H1 (cell line): ENCODE measurements at regions of chr1 and their contacts with region 1.

Region 1: GRCh38 chr1:26864610-26865527 is 1.9 kb downstream of the SFN start:
- DNase-seq: peak; percentile 95 to 97
- H3K4me3 ChIP-seq: peak overlapping the region; percentile 58 to 68 (median 62)
- H3K27ac ChIP-seq: peak overlapping the region; percentile 52; the same call in 1 of the 2 replicates
- H3K4me1 ChIP-seq: peaks cover 0 to 27% (median 21%) of the 10 kb centered on the region in 4 experiments; a peak in 5 of 7 replicates
- H3K27me3 ChIP-seq: peaks cover 4 to 13% (median 12%) of the 10 kb centered on the region in 4 experiments; a peak in 5 of 7 replicates
- CTCF ChIP-seq: no peak; a peak in 1 of 4 replicates
- EP300 ChIP-seq: no peak
- POLR2A ChIP-seq: peak; percentile 76 to 83
- RAD21 ChIP-seq: no peak

Region 2: GRCh38 chr1:26529655-26530409 is 335.0 kb before region 1 on chr1 and contains the start of gene RPS6KA1:
- CTCF ChIA-PET with region 1: no interaction called
- POLR2A ChIA-PET with region 1: no interaction called
- DNase-seq: peak in 1 of 2 experiments; percentile 88
- H3K4me3 ChIP-seq: peak within 1 kb of the TSS; percentile 51 to 97 (median 94)
- H3K27ac ChIP-seq: peak within 1 kb of the TSS; percentile 42; the same call in 1 of the 2 replicates
- H3K4me1 ChIP-seq: peaks cover 11 to 20% (median 19%) of the 10 kb centered on the region in 4 experiments
- H3K27me3 ChIP-seq: no peaks in the 10 kb centered on the region
- CTCF ChIP-seq: no peak
- EP300 ChIP-seq: no peak
- POLR2A ChIP-seq: peak; percentile 67 to 69; a peak in 2 of 3 replicates
- RAD21 ChIP-seq: no peak
- total RNA-seq, gene RPS6KA1: 55.0 and 56.5 TPM in 2 replicates

Region 3: GRCh38 chr1:26797627-26798026 is 67.2 kb before region 1 on chr1:
- CTCF ChIA-PET with region 1: no interaction called
- POLR2A ChIA-PET with region 1: no interaction called
- DNase-seq: no peak
- H3K4me3 ChIP-seq: no peak overlapping the region
- H3K27ac ChIP-seq: no peak overlapping the region
- H3K4me1 ChIP-seq: peaks cover 3 to 12% (median 5%) of the 10 kb centered on the region in 4 experiments; a peak in 4 of 7 replicates
- H3K27me3 ChIP-seq: no peaks in the 10 kb centered on the region
- CTCF ChIP-seq: no peak
- EP300 ChIP-seq: no peak
- POLR2A ChIP-seq: no peak
- RAD21 ChIP-seq: no peak

Region 4: DNA sequence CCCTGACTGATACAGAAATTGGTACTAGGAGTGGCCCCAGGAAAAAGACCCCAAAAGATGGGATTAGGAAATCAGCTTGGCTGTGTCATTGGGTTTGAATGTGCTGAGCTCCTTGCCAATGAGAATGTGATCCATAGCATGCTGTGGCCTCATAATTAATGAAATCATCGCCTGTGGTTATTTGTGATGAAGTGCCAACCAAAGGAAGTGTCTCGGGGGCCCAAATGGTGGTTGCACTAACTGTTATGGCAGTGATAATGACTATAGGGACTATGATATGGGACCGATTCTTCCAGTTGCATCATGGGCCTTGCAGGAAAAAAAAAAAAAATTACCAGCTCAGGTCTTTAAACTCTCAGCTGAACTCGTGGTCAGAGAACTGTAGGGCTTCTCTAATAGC is 53.8 kb before region 1 on chr1:
- CTCF ChIA-PET with region 1: interaction called, 31 read pairs
- POLR2A ChIA-PET with region 1: interaction called, 3 read pairs
- DNase-seq: no peak
- H3K4me3 ChIP-seq: no peak overlapping the region
- H3K27ac ChIP-seq: no peak overlapping the region
- H3K4me1 ChIP-seq: no peaks in the 10 kb centered on the region
- H3K27me3 ChIP-seq: no peaks in the 10 kb centered on the region
- CTCF ChIP-seq: no peak
- EP300 ChIP-seq: no peak
- POLR2A ChIP-seq: no peak
- RAD21 ChIP-seq: no peak

Region 5: GRCh38 chr1:26826261-26827105 is 38.4 kb before region 1 on chr1 and contains the start of gene ZDHHC18:
- CTCF ChIA-PET with region 1: interaction called, 125 read pairs
- POLR2A ChIA-PET with region 1: interaction called, 4 read pairs
- DNase-seq: peak in 1 of 2 experiments; percentile 86
- H3K4me3 ChIP-seq: peak within 1 kb of the TSS; percentile 53 to 76 (median 56)
- H3K27ac ChIP-seq: no peak within 1 kb of the TSS
- H3K4me1 ChIP-seq: peaks cover 6 to 9% (median 7%) of the 10 kb centered on the region in 4 experiments; a peak in 6 of 7 replicates
- H3K27me3 ChIP-seq: no peaks in the 10 kb centered on the region
- CTCF ChIP-seq: peak; percentile 55 to 68 (median 65)
- EP300 ChIP-seq: no peak
- POLR2A ChIP-seq: peak in 1 of 2 experiments; percentile 34; a peak in 1 of 3 replicates
- RAD21 ChIP-seq: peak in 1 of 2 experiments; percentile 0; a peak in 2 of 4 replicates
- total RNA-seq, gene ZDHHC18: 29.2 and 29.7 TPM in 2 replicates

Region 6: GRCh38 chr1:26853156-26853555 is 11.7 kb before region 1 on chr1:
- CTCF ChIA-PET with region 1: interaction called, 547 read pairs
- POLR2A ChIA-PET with region 1: interaction called, 8 read pairs
- DNase-seq: peak in 1 of 2 experiments; percentile 94
- H3K4me3 ChIP-seq: no peak overlapping the region
- H3K27ac ChIP-seq: no peak overlapping the region
- H3K4me1 ChIP-seq: peaks cover 0 to 10% (median 6%) of the 10 kb centered on the region in 4 experiments; a peak in 6 of 7 replicates
- H3K27me3 ChIP-seq: no peaks in the 10 kb centered on the region
- CTCF ChIP-seq: peak; percentile 85 to 87 (median 85)
- EP300 ChIP-seq: no peak
- POLR2A ChIP-seq: no peak
- RAD21 ChIP-seq: peak; percentile 74 to 83

Region 7: GRCh38 chr1:26900001-26900814 is 35.3 kb after region 1 on chr1 and contains the start of gene GPATCH3:
- CTCF ChIA-PET with region 1: interaction called, 547 read pairs
- POLR2A ChIA-PET with region 1: interaction called, 12 read pairs
- DNase-seq: peak; percentile 71 to 91
- H3K4me3 ChIP-seq: peak within 1 kb of the TSS; percentile 90 to 98 (median 96)
- H3K27ac ChIP-seq: peak within 1 kb of the TSS; percentile 88
- H3K4me1 ChIP-seq: peaks cover 0 to 8% (median 3%) of the 10 kb centered on the region in 4 experiments; a peak in 3 of 7 replicates
- H3K27me3 ChIP-seq: no peaks in the 10 kb centered on the region
- CTCF ChIP-seq: no peak
- EP300 ChIP-seq: no peak
- POLR2A ChIP-seq: peak; percentile 89 to 98
- RAD21 ChIP-seq: no peak
- total RNA-seq, gene GPATCH3: 17.4 and 19.8 TPM in 2 replicates

Region 8: GRCh38 chr1:26957306-26957705 is 92.4 kb after region 1 on chr1:
- CTCF ChIA-PET with region 1: no interaction called
- POLR2A ChIA-PET with region 1: no interaction called
- DNase-seq: no peak
- H3K4me3 ChIP-seq: no peak overlapping the region
- H3K27ac ChIP-seq: no peak overlapping the region
- H3K4me1 ChIP-seq: peaks cover 0 to 3% (median 0%) of the 10 kb centered on the region in 4 experiments; a peak in 3 of 7 replicates
- H3K27me3 ChIP-seq: no peaks in the 10 kb centered on the region
- CTCF ChIP-seq: no peak
- EP300 ChIP-seq: no peak
- POLR2A ChIP-seq: no peak
- RAD21 ChIP-seq: no peak

Region 9: GRCh38 chr1:27087371-27088220 is 222.7 kb after region 1 on chr1:
- CTCF ChIA-PET with region 1: no interaction called
- POLR2A ChIA-PET with region 1: no interaction called
- DNase-seq: no peak
- H3K4me3 ChIP-seq: no peak overlapping the region
- H3K27ac ChIP-seq: no peak overlapping the region
- H3K4me1 ChIP-seq: no peaks in the 10 kb centered on the region
- H3K27me3 ChIP-seq: no peaks in the 10 kb centered on the region
- CTCF ChIP-seq: no peak
- EP300 ChIP-seq: no peak
- POLR2A ChIP-seq: no peak
- RAD21 ChIP-seq: no peak